Endothelial cell of umbilical vein (primary cell): ENCODE measurements at regions of chr2 and their contacts with region 1.

Region 1: GRCh38 chr2:20578895-20579825 is 71.7 kb downstream of the HS1BP3 start:
- DNase-seq: peak; percentile 100
- H3K4me3 ChIP-seq: no peak overlapping the region
- H3K27ac ChIP-seq: peak overlapping the region; percentile 100
- H3K4me1 ChIP-seq: peaks cover 84% of the 10 kb centered on the region
- H3K27me3 ChIP-seq: no peaks in the 10 kb centered on the region
- CTCF ChIP-seq: no peak
- POLR2A ChIP-seq: no peak

Region 2: GRCh38 chr2:20514596-20515269 is 64.4 kb before region 1 on chr2:
- CTCF ChIA-PET with region 1: interaction called, 3 read pairs
- POLR2A ChIA-PET with region 1: no interaction called
- dilution Hi-C with region 1: no loop called
- intact Hi-C with region 1: loop called (anchors 1 kb)
- DNase-seq: peak; percentile 99
- H3K4me3 ChIP-seq: peak overlapping the region in 1 of 3 experiments; percentile 15
- H3K27ac ChIP-seq: peak overlapping the region; percentile 100
- H3K4me1 ChIP-seq: peaks cover 21% of the 10 kb centered on the region
- H3K27me3 ChIP-seq: no peaks in the 10 kb centered on the region
- CTCF ChIP-seq: no peak
- POLR2A ChIP-seq: no peak

Region 3: DNA sequence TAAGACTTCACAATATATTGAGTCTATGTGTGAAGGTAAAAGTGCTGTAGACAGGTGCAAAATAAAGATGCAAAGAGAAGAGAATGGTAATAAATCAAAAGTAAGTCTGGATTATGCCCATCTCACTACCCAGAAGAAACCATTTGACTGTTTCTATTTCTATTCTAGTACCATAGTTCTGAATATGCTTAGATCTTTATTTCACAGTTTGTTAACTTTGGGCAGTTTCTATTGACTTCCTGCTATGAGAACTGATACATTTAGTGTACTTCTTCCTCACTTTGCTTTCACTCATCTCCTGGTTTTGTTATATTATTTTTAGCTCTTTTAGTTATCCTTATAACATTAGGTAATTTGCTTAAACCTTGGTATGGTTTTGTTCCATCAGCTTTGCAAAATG is 23.2 kb before region 1 on chr2:
- CTCF ChIA-PET with region 1: no interaction called
- POLR2A ChIA-PET with region 1: no interaction called
- dilution Hi-C with region 1: no loop called
- intact Hi-C with region 1: no loop called
- DNase-seq: no peak
- H3K4me3 ChIP-seq: no peak overlapping the region
- H3K27ac ChIP-seq: no peak overlapping the region
- H3K4me1 ChIP-seq: no peaks in the 10 kb centered on the region
- H3K27me3 ChIP-seq: no peaks in the 10 kb centered on the region
- CTCF ChIP-seq: no peak
- POLR2A ChIP-seq: no peak

Region 4: DNA sequence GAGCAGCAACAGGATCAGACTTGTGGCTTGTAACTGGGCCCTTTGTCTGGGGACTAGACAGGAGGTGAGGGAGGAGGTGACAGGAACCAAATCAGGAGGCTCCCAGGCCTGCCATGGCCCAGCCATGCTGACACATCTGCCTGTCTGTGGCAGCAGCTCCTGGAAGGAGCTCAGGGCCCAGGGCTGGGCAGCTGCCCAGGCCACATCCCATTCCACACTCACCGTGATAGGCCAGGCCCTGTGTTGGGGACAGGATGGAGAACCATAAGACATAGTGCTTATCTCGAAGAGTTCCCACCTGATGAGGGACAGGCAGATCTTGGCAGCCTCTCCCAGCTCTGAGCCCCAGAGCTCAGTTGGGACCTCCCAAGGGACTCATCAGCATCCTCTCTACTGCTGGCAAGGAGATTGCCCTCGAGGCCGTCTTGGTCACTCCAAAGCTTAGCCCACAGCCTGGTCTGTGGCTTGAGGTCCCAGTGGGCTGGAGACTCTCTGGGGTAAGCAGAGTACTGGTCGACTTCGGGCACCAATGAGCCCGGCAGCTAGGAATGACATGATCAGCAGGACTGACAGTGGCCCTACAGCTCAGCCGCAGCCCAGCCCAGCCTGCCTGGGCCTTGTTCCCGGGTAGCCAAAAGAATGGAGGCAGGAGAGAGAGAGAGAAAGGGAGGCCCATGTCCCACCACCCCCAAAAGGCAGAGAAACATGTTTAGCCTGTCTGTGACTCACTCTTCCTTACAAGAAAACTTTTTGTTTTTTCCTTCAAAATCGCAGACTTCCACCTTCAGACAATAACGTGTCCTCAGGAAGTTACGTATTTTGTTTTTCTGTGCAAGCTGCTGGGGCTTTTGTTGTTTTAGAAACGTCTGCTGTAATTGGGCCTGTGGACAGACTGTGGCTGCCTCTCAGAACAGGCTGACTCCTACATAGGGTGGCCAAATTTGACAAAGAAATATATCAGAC is 10.4 kb before region 1 on chr2:
- CTCF ChIA-PET with region 1: interaction called, 10 read pairs
- POLR2A ChIA-PET with region 1: interaction called, 21 read pairs
- dilution Hi-C with region 1: no loop called
- intact Hi-C with region 1: loop called (anchors 1 kb)
- DNase-seq: peak; percentile 98
- H3K4me3 ChIP-seq: no peak overlapping the region
- H3K27ac ChIP-seq: peak overlapping the region; percentile 100
- H3K4me1 ChIP-seq: peaks cover 72% of the 10 kb centered on the region
- H3K27me3 ChIP-seq: no peaks in the 10 kb centered on the region
- CTCF ChIP-seq: no peak
- POLR2A ChIP-seq: peak; percentile 72

Region 5: GRCh38 chr2:20600756-20601325 is 21.7 kb after region 1 on chr2:
- CTCF ChIA-PET with region 1: interaction called, 23 read pairs
- POLR2A ChIA-PET with region 1: interaction called, 16 read pairs
- dilution Hi-C with region 1: no loop called
- intact Hi-C with region 1: loop called (anchors 1 kb)
- DNase-seq: peak; percentile 71
- H3K4me3 ChIP-seq: no peak overlapping the region
- H3K27ac ChIP-seq: peak overlapping the region; percentile 35
- H3K4me1 ChIP-seq: peaks cover 44% of the 10 kb centered on the region
- H3K27me3 ChIP-seq: no peaks in the 10 kb centered on the region
- CTCF ChIP-seq: peak in 1 of 2 donors; percentile 16
- POLR2A ChIP-seq: no peak

Region 6: GRCh38 chr2:20617892-20618467 is 38.8 kb after region 1 on chr2:
- CTCF ChIA-PET with region 1: interaction called, 17 read pairs
- POLR2A ChIA-PET with region 1: interaction called, 5 read pairs
- dilution Hi-C with region 1: no loop called
- intact Hi-C with region 1: loop called (anchors 1 kb)
- DNase-seq: peak; percentile 98
- H3K4me3 ChIP-seq: no peak overlapping the region
- H3K27ac ChIP-seq: peak overlapping the region; percentile 77
- H3K4me1 ChIP-seq: peaks cover 34% of the 10 kb centered on the region
- H3K27me3 ChIP-seq: no peaks in the 10 kb centered on the region
- CTCF ChIP-seq: peak; percentile 34 to 67
- POLR2A ChIP-seq: no peak